ENCODE measurements at regions of chr5 and their contacts with region 1.

Region 1: DNA sequence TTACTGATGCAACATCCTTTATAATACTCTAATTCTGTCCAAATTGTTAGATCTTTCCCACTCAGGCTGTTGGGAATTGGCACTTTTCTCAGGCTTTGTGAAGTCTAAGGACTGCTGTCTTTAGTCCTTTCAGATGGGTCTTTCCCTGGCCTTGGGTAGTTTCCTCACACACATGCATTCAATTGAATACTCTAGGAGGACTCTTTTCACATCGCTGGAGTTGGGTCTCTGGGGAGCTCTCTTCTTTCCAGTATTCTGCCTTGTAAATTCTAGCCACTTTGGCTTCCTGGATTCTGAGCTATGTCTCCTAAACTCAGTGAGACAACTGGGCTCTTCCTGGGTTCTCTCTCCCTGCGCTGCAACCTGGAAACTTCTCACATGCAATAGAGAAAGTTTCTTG is 215.5 kb downstream of the SNX18 start:
- DNase-seq: no peak
- ATAC-seq: no peak
- H3K4me3 ChIP-seq: no peak overlapping the region
- H3K4me3 Mint-ChIP-seq: no peak overlapping the region
- H3K27ac ChIP-seq: no peak overlapping the region
- H3K27ac Mint-ChIP-seq: no peak overlapping the region
- H3K4me1 ChIP-seq: no peaks in the 10 kb centered on the region
- H3K4me1 Mint-ChIP-seq: peaks cover 0 to 1% (median 0%) of the 10 kb centered on the region in 3 donors
- H3K27me3 ChIP-seq: no peaks in the 10 kb centered on the region
- H3K27me3 Mint-ChIP-seq: peaks cover 0 to under 1% of the 10 kb centered on the region in 2 donors

Region 2: DNA sequence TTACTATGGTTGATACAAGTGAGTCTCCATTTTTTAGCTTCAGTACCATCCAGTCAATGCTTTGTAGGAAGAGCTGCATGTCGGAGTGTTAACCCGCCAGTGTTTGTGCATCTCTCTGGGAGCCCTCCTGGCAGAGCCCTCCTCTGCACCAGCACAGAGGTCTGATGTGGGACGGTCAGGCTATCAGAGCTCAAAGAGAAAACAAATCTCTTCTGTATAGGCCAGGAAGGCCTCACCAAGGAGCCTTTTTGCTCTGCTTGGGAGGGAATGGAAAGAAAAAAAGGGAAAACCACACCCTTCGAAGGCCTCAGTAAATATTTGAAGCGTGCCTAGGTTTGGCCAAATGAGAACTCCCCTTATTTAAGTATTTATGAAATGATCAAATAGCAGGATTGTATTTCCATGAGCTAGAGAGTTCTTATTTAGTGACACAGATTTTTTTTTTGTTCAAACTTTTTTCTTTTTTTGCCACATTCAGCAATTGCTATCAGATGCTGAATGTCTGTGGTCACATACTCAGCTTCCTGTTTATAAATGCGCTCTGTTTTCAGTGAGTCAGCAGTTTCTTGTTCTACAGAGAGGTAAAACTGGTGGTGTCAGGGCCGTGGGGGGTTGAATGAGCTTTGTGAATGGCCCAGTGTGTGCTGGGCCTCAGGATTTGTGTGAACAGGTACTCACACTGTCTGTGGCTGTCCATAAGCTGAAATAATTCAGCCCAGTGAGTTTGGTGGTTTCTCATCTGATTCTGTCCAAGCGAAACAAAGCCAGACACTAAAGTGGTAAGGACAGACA is 11.1 kb after region 1 on chr5:
- CTCF ChIA-PET with region 1: no interaction called
- POLR2A ChIA-PET with region 1: interaction called in 1 of 2 experiments, 10 read pairs
- DNase-seq: peak in 34 of 35 experiments; percentile 5 to 72 (median 30)
- ATAC-seq: peak; percentile 91 to 96 (median 95)
- H3K4me3 ChIP-seq: no peak overlapping the region
- H3K4me3 Mint-ChIP-seq: peak overlapping the region; percentile 2 to 42 (median 22)
- H3K27ac ChIP-seq: peak overlapping the region; percentile 61
- H3K27ac Mint-ChIP-seq: peak overlapping the region; percentile 77 to 85
- H3K4me1 ChIP-seq: peaks cover 6 to 32% of the 10 kb centered on the region in 2 experiments
- H3K4me1 Mint-ChIP-seq: peaks cover 25 to 36% (median 30%) of the 10 kb centered on the region in 3 donors
- H3K27me3 ChIP-seq: no peaks in the 10 kb centered on the region
- H3K27me3 Mint-ChIP-seq: peaks cover 2 to 3% of the 10 kb centered on the region in 2 donors